ENCODE measurements at regions of chr3 and their contacts with region 1.

Region 1: GRCh38 chr3:138915503-138916498 is 31.1 kb downstream of the FOXL2 start:
- DNase-seq: peak; percentile 71 to 96
- H3K4me3 ChIP-seq: peak overlapping the region; percentile 74 to 84
- H3K27ac ChIP-seq: peak overlapping the region; percentile 92 to 94
- H3K4me1 ChIP-seq: no peaks in the 10 kb centered on the region
- H3K27me3 ChIP-seq: no peaks in the 10 kb centered on the region
- CTCF ChIP-seq: peak; percentile 84 to 92 (median 87)

Region 2: GRCh38 chr3:138347960-138348753 is 567.6 kb before region 1 on chr3 and contains the start of gene MRAS:
- intact Hi-C with region 1: loop called (anchors 5 kb)
- DNase-seq: peak; percentile 28 to 91
- H3K4me3 ChIP-seq: peak within 1 kb of the TSS; percentile 96 to 98
- H3K27ac ChIP-seq: peak within 1 kb of the TSS; percentile 92 to 99
- H3K4me1 ChIP-seq: peaks cover 5 to 7% of the 10 kb centered on the region in 2 donors
- H3K27me3 ChIP-seq: no peaks in the 10 kb centered on the region
- CTCF ChIP-seq: peak in 2 of 3 experiments; percentile 28 to 39
- total RNA-seq, gene MRAS: 24.5 TPM

Region 3: GRCh38 chr3:138694287-138695007 is 221.4 kb before region 1 on chr3:
- intact Hi-C with region 1: loop called (anchors 2 kb)
- DNase-seq: no peak
- H3K4me3 ChIP-seq: no peak overlapping the region
- H3K27ac ChIP-seq: peak overlapping the region in 1 of 2 donors; percentile 14
- H3K4me1 ChIP-seq: peaks cover 0 to 7% of the 10 kb centered on the region in 2 donors
- H3K27me3 ChIP-seq: no peaks in the 10 kb centered on the region
- CTCF ChIP-seq: no peak

Region 4: DNA sequence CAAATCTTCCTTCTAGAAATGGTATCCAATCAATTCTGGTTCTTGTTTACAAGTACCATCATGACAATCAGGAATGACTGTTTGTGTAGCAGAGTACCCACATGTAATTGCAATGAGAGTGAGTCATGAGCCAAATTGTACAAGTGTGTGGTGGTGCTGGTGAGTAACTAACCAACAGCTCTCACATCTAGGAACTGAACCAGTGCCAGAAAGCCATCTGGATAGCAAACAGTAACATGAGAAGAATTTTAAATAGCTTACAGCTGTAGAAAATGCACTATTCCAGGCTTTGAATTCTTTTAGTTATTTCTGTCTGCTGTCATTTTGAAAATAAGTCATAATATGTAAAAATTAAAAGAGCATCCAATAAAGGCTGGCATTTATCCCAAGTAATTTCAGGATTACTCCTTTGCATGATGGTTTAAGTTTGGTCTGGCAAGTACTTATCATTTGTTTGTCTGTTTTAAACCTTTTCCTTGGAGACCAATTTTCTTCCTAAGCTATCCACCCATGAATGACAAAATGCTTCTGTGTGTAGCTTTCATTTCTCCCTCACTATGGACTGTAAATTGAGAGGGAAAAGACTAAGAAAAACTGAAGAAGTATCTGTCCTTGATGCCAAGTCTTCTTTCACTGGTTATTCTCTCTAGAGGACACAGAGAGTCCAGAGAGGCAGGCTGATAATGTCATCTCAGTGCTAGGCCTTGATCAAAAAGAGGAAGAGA is 141.1 kb before region 1 on chr3:
- intact Hi-C with region 1: loop called (anchors 1 kb)
- DNase-seq: peak; percentile 16 to 81
- H3K4me3 ChIP-seq: no peak overlapping the region
- H3K27ac ChIP-seq: peak overlapping the region; percentile 41 to 58
- H3K4me1 ChIP-seq: peaks cover 3 to 7% of the 10 kb centered on the region in 2 donors
- H3K27me3 ChIP-seq: no peaks in the 10 kb centered on the region
- CTCF ChIP-seq: no peak

Region 5: DNA sequence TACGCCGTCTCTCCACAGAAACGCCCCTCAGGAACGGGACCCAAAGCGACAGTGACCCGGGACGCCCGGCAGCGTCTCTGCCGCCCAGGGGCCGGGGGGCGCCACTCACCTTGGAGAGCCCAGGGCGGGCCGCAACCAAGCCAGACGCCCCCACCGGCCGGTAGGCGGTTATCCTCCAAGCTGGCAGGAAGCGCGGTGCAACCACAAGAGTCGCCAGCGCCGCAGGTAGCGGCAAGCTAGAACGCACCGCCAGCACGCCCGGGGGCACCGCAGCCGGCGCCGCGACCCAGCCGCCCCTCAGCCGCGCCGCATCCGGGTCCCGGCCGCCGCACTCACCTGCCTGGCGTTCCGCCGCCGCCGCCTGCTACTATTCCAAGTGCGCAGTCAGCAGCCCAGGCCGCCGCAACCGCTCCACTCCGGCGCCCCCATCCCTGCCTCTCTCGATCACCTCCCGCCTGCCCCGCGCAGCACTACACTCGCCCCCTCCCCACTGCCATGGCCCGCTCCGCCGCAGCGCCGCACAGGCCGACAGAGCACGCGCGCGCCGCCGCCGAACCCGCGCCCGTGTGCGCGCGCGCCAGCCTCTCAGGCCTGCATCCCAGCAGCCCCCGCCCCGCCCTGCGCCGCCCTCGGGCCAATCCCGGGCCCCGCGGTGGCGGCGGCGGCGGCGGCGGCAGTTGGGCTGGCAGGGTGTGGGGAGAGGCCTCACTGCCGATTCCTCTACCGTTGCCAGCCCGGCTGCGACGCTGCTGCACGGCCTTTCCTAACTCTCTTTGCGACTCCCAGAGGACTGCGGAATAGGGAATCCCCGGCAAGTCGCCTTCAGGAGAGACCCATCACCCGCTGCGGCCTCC is 81.2 kb before region 1 on chr3 and contains the start of gene PIK3CB:
- intact Hi-C with region 1: loop called (anchors 1 kb)
- DNase-seq: peak; percentile 31 to 93
- H3K4me3 ChIP-seq: peak within 1 kb of the TSS; percentile 70 to 98
- H3K27ac ChIP-seq: peak within 1 kb of the TSS; percentile 89 to 90
- H3K4me1 ChIP-seq: peaks cover 0 to 13% of the 10 kb centered on the region in 2 donors
- H3K27me3 ChIP-seq: no peaks in the 10 kb centered on the region
- CTCF ChIP-seq: peak; percentile 26 to 39 (median 28)
- total RNA-seq, gene PIK3CB: 9.3 TPM